ENCODE measurements at regions of chr18 and their contacts with region 1.

Region 1: GRCh38 chr18:46073474-46074331 is 1.6 kb upstream of the PSTPIP2 start:
- DNase-seq: no peak
- ATAC-seq: peak; percentile 63
- H3K4me3 ChIP-seq: no peak overlapping the region
- H3K27ac ChIP-seq: no peak overlapping the region
- H3K4me1 ChIP-seq: peaks cover 14% of the 10 kb centered on the region
- H3K27me3 ChIP-seq: no peaks in the 10 kb centered on the region; a peak in 1 of 4 replicates
- CTCF ChIP-seq: peak; percentile 44 to 68 (median 51); a peak in 5 of 6 replicates
- EP300 ChIP-seq: no peak
- POLR2A ChIP-seq: no peak
- RAD21 ChIP-seq: peak; percentile 91

Region 2: GRCh38 chr18:45652303-45653080 is 421.2 kb before region 1 on chr18:
- CTCF ChIA-PET with region 1: no interaction called
- POLR2A ChIA-PET with region 1: no interaction called
- RAD21 ChIA-PET with region 1: no interaction called
- SMC1A ChIA-PET with region 1: no interaction called
- in situ Hi-C with region 1: no loop called
- intact Hi-C with region 1: no loop called
- DNase-seq: no peak
- ATAC-seq: no peak
- H3K4me3 ChIP-seq: no peak overlapping the region
- H3K27ac ChIP-seq: no peak overlapping the region
- H3K4me1 ChIP-seq: no peaks in the 10 kb centered on the region
- H3K27me3 ChIP-seq: no peaks in the 10 kb centered on the region; a peak in 1 of 4 replicates
- CTCF ChIP-seq: no peak
- EP300 ChIP-seq: no peak
- POLR2A ChIP-seq: no peak
- RAD21 ChIP-seq: no peak

Region 3: GRCh38 chr18:45690975-45691815 is 382.5 kb before region 1 on chr18:
- CTCF ChIA-PET with region 1: interaction called, 26 read pairs
- POLR2A ChIA-PET with region 1: no interaction called
- RAD21 ChIA-PET with region 1: interaction called, 13 read pairs
- SMC1A ChIA-PET with region 1: interaction called, 7 read pairs
- in situ Hi-C with region 1: loop called (anchors 10 kb)
- intact Hi-C with region 1: loop called (anchors 5 kb)
- DNase-seq: no peak
- ATAC-seq: peak; percentile 28
- H3K4me3 ChIP-seq: no peak overlapping the region
- H3K27ac ChIP-seq: no peak overlapping the region
- H3K4me1 ChIP-seq: peaks cover 32% of the 10 kb centered on the region
- H3K27me3 ChIP-seq: no peaks in the 10 kb centered on the region
- CTCF ChIP-seq: peak; percentile 79 to 93 (median 82)
- EP300 ChIP-seq: no peak
- POLR2A ChIP-seq: no peak
- RAD21 ChIP-seq: peak; percentile 91

Region 4: DNA sequence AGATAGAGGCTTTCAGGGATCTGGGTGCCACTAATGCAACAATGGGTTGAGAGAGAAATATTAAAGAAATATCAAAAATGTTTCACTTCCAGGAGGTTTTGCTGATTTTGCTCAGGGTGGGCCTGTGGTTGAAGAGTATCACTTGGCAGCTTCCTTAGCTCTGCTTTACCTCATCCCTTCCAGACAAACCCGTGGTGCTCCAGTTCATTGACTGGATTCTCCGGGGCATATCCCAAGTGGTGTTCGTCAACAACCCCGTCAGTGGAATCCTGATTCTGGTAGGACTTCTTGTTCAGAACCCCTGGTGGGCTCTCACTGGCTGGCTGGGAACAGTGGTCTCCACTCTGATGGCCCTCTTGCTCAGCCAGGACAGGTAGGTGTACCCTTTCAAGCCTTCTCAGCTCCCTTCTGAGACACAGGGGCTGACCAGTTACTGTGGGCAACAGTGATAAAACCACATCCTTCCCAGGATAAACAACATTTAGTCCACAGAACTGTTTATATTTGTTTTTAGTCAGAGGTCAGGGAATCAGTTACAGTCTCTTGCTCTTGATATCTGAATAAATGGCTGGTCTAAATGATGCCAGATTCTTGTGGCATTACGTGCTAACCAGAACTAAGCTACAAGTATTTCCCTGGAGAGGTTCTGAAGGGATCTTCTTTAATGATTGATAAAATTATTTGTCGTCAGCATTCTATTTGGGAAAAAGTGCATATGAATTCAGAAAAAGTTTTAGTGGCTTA is 342.7 kb before region 1 on chr18:
- CTCF ChIA-PET with region 1: interaction called, 16 read pairs
- POLR2A ChIA-PET with region 1: no interaction called
- RAD21 ChIA-PET with region 1: no interaction called
- SMC1A ChIA-PET with region 1: interaction called, 3 read pairs
- in situ Hi-C with region 1: no loop called
- intact Hi-C with region 1: no loop called
- DNase-seq: no peak
- ATAC-seq: no peak
- H3K4me3 ChIP-seq: no peak overlapping the region
- H3K27ac ChIP-seq: no peak overlapping the region
- H3K4me1 ChIP-seq: no peaks in the 10 kb centered on the region
- H3K27me3 ChIP-seq: no peaks in the 10 kb centered on the region; a peak in 2 of 4 replicates
- CTCF ChIP-seq: no peak
- EP300 ChIP-seq: no peak
- POLR2A ChIP-seq: no peak
- RAD21 ChIP-seq: no peak

Region 5: DNA sequence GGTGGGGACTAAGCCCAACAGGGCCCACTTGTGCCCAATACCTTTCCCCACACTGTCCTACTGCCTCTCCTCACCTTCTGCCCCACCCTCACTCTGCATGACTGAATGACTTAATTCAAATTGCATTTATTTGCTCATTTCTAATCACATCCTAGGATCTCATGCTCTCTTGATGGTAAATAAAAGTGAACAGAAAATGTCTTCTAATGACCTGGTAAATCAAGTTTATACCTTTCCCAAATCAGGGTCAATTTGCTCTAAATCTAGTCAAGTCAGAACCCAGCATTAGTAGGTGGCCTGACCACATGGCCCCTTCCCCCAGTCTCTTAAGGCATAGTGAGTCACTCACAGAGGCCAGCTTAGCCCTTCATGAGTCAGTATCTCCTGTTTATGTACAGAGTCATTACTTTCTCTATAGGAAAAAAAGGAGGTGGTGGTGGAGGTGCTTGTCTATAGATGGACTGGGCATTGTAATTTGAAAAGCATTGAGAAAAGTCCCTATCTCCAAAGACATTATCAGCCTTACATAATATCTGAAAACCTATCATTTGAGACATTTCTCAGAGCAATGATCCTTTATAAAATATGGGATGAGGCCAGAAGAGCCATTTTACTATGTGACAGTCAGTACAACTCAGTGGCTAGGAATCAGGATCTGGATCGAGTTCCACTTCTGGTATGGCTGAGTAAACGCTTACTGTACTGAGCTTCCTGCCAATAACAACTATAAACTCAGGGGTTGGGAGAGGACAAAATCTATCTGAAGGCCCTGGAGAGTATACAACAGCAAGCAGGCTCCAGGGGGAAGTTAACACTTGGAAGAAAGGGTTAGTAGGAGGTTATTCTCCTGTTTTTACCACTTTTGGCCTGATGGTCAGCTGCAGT is 270.9 kb before region 1 on chr18:
- CTCF ChIA-PET with region 1: no interaction called
- POLR2A ChIA-PET with region 1: no interaction called
- RAD21 ChIA-PET with region 1: no interaction called
- SMC1A ChIA-PET with region 1: no interaction called
- in situ Hi-C with region 1: no loop called
- intact Hi-C with region 1: no loop called
- DNase-seq: no peak
- ATAC-seq: no peak
- H3K4me3 ChIP-seq: no peak overlapping the region
- H3K27ac ChIP-seq: no peak overlapping the region
- H3K4me1 ChIP-seq: no peaks in the 10 kb centered on the region
- H3K27me3 ChIP-seq: no peaks in the 10 kb centered on the region
- CTCF ChIP-seq: no peak
- EP300 ChIP-seq: no peak
- POLR2A ChIP-seq: no peak
- RAD21 ChIP-seq: no peak

Region 6: GRCh38 chr18:45920367-45920766 is 153.3 kb before region 1 on chr18:
- CTCF ChIA-PET with region 1: interaction called, 16 read pairs
- POLR2A ChIA-PET with region 1: no interaction called
- RAD21 ChIA-PET with region 1: interaction called, 4 read pairs
- SMC1A ChIA-PET with region 1: interaction called, 4 read pairs
- in situ Hi-C with region 1: loop called (anchors 5 kb)
- intact Hi-C with region 1: loop called (anchors 2 kb)
- DNase-seq: no peak
- ATAC-seq: peak; percentile 54
- H3K4me3 ChIP-seq: no peak overlapping the region
- H3K27ac ChIP-seq: no peak overlapping the region
- H3K4me1 ChIP-seq: no peaks in the 10 kb centered on the region
- H3K27me3 ChIP-seq: no peaks in the 10 kb centered on the region
- CTCF ChIP-seq: no peak
- EP300 ChIP-seq: no peak
- POLR2A ChIP-seq: no peak
- RAD21 ChIP-seq: no peak

Region 7: GRCh38 chr18:45974088-45974536 is 99.6 kb before region 1 on chr18:
- CTCF ChIA-PET with region 1: interaction called, 30 read pairs
- POLR2A ChIA-PET with region 1: no interaction called
- RAD21 ChIA-PET with region 1: interaction called, 10 read pairs
- SMC1A ChIA-PET with region 1: interaction called, 9 read pairs
- in situ Hi-C with region 1: no loop called
- intact Hi-C with region 1: loop called (anchors 5 kb)
- DNase-seq: peak; percentile 32
- ATAC-seq: peak; percentile 90
- H3K4me3 ChIP-seq: no peak overlapping the region
- H3K27ac ChIP-seq: no peak overlapping the region
- H3K4me1 ChIP-seq: no peaks in the 10 kb centered on the region
- H3K27me3 ChIP-seq: no peaks in the 10 kb centered on the region
- CTCF ChIP-seq: peak; percentile 57 to 87 (median 64); a peak in 5 of 6 replicates
- EP300 ChIP-seq: no peak
- POLR2A ChIP-seq: no peak
- RAD21 ChIP-seq: peak; percentile 93

Region 8: GRCh38 chr18:46060359-46060841 is 13.3 kb before region 1 on chr18:
- CTCF ChIA-PET with region 1: interaction called, 18 read pairs
- POLR2A ChIA-PET with region 1: no interaction called
- RAD21 ChIA-PET with region 1: interaction called, 9 read pairs
- SMC1A ChIA-PET with region 1: interaction called, 13 read pairs
- in situ Hi-C with region 1: no loop called
- intact Hi-C with region 1: no loop called
- DNase-seq: no peak
- ATAC-seq: no peak
- H3K4me3 ChIP-seq: no peak overlapping the region
- H3K27ac ChIP-seq: no peak overlapping the region
- H3K4me1 ChIP-seq: peaks cover 9% of the 10 kb centered on the region
- H3K27me3 ChIP-seq: no peaks in the 10 kb centered on the region
- CTCF ChIP-seq: no peak
- EP300 ChIP-seq: no peak
- POLR2A ChIP-seq: no peak
- RAD21 ChIP-seq: no peak

Measured in GM12878 (cell line).